MCF 10A (cell line): ENCODE measurements at regions of chr9 and their contacts with region 1.

Region 1: DNA sequence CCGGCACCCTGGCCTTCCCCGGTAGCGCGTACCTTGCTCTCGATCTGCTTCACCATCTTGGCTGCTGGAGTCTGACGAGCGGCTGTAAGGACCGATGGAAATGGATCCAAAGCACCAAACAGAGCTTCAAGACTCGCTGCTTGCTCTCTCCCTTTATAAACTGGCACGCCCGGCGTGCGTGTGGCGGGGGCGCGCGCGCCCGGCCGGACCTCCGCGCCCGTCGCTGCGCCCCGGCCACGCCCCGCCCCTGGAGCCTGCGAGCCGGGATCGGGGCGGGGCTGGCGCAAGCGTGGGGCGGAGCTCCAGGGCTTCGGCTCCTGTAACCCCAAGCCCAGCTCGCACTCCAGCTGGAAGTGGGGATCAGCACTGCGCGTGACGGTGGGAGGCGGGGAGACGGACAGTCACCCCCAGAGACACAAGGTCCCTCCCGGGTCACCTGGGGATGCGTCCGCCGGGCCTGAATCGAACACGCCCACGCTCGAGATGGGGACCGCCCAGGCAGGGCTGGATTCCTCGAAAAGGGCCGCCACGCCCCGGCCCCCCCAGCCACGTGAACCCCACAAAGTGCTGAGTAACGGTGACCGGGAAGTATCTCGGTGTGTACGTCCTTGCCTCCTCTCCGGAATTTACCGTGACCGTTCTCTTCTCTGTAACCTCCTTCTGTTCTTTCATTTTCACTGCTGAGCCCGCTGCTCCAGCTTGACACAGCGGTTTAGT is at the start of gene TXN:
- DNase-seq: peak; percentile 92
- H3K4me3 Mint-ChIP-seq: peak within 1 kb of the TSS; percentile 91
- H3K27ac Mint-ChIP-seq: peak within 1 kb of the TSS; percentile 92
- H3K4me1 Mint-ChIP-seq: peaks cover 40% of the 10 kb centered on the region
- H3K27me3 Mint-ChIP-seq: no peaks in the 10 kb centered on the region
- CTCF ChIP-seq: no peak
- total RNA-seq, gene TXN: 349 TPM in 2 replicates

Region 2: DNA sequence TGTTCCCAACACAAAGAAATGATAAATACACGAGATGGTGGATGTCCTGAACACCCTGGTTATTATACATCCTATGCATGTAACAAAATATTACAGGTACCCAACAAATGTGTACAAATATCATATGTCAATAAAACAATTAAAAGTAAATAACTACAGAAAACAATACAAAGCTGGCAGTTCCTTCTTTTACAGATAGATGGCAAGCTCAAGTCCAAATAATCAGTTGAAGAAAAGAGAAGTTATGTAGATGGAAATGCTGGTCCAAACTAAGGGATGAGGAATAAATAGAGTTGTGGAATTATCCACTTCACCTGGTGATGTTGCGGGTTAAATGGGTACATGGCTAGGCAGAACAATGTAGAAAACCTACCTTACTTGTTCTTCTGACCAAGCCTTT is 397.1 kb before region 1 on chr9:
- CTCF ChIA-PET with region 1: no interaction called
- POLR2A ChIA-PET with region 1: no interaction called
- intact Hi-C with region 1: no loop called
- DNase-seq: no peak
- H3K4me3 Mint-ChIP-seq: no peak overlapping the region
- H3K27ac Mint-ChIP-seq: no peak overlapping the region
- H3K4me1 Mint-ChIP-seq: peaks cover 4% of the 10 kb centered on the region
- H3K27me3 Mint-ChIP-seq: no peaks in the 10 kb centered on the region
- CTCF ChIP-seq: no peak

Region 3: DNA sequence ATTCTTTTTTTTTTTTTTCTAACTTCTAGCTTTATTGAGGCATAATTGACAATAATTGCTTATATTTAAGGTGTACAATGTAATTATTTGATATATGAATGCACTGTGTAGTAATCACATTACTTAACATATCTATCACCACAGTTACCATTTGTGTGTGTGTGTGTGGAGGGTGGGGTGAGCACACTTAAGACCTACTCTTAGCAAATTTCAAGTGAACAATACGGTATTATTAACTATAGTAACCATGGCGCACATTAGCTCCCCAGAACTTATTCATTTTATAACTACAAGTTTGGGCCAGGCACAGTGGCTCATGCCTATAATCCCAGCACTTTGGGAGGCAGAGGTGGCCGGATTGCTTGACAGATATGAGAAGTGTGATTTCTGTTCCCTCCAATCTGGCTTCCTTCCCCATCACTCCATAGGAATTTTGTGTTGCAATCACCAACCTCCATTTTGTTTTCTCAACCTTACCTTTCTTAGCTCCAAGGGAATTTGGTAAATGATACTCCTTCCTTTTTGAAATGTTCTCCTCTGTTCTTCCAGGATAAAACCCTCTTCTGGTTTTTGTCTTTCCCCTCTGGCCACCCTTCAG is 15.2 kb before region 1 on chr9:
- CTCF ChIA-PET with region 1: interaction called, 3 read pairs
- POLR2A ChIA-PET with region 1: interaction called, 20 read pairs
- intact Hi-C with region 1: no loop called
- DNase-seq: no peak
- H3K4me3 Mint-ChIP-seq: no peak overlapping the region
- H3K27ac Mint-ChIP-seq: no peak overlapping the region
- H3K4me1 Mint-ChIP-seq: no peaks in the 10 kb centered on the region
- H3K27me3 Mint-ChIP-seq: no peaks in the 10 kb centered on the region
- CTCF ChIP-seq: no peak

Region 4: DNA sequence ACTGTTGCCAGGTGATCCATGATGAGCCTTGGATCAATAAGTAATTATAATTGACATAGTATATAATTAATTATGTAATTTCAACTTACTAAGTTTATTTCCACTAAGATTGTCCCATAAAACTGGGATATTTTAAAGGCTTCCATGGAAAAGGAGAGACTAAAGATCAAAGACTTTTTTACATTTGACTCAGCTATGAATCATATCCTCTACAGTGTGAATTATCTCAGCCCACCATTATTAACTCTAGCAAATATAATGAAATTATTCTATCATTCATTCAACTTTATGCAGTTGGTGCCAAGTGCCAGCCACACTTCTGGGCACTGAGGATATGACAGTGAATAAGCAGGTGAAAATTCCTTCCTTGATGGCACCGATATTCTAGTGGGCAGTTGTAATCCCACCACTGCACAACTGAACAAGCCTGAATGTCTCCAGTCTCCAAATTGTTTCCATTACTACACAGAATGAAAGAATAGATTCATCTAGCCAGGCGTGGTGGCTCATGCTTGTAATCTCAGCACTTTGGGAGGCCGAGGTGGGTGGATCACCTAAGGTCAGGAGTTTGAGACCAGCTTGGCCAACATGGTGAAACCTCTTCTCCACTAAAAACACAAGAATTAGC is 21.7 kb after region 1 on chr9:
- CTCF ChIA-PET with region 1: interaction called, 15 read pairs
- POLR2A ChIA-PET with region 1: interaction called, 155 read pairs
- intact Hi-C with region 1: no loop called
- DNase-seq: no peak
- H3K4me3 Mint-ChIP-seq: no peak overlapping the region
- H3K27ac Mint-ChIP-seq: no peak overlapping the region
- H3K4me1 Mint-ChIP-seq: no peaks in the 10 kb centered on the region
- H3K27me3 Mint-ChIP-seq: no peaks in the 10 kb centered on the region
- CTCF ChIP-seq: no peak

Region 5: GRCh38 chr9:110291921-110292575 is 35.5 kb after region 1 on chr9:
- CTCF ChIA-PET with region 1: interaction called, 3 read pairs
- POLR2A ChIA-PET with region 1: interaction called, 28 read pairs
- intact Hi-C with region 1: no loop called
- DNase-seq: peak; percentile 57
- H3K4me3 Mint-ChIP-seq: no peak overlapping the region
- H3K27ac Mint-ChIP-seq: no peak overlapping the region
- H3K4me1 Mint-ChIP-seq: peaks cover 12% of the 10 kb centered on the region
- H3K27me3 Mint-ChIP-seq: no peaks in the 10 kb centered on the region
- CTCF ChIP-seq: no peak

Region 6: GRCh38 chr9:110370316-110370715 is 113.8 kb after region 1 on chr9:
- CTCF ChIA-PET with region 1: no interaction called
- POLR2A ChIA-PET with region 1: interaction called, 13 read pairs
- intact Hi-C with region 1: no loop called
- DNase-seq: peak; percentile 31
- H3K4me3 Mint-ChIP-seq: no peak overlapping the region
- H3K27ac Mint-ChIP-seq: no peak overlapping the region
- H3K4me1 Mint-ChIP-seq: no peaks in the 10 kb centered on the region
- H3K27me3 Mint-ChIP-seq: no peaks in the 10 kb centered on the region
- CTCF ChIP-seq: no peak

Region 7: GRCh38 chr9:110476251-110476650 is 219.7 kb after region 1 on chr9:
- CTCF ChIA-PET with region 1: no interaction called
- POLR2A ChIA-PET with region 1: no interaction called
- intact Hi-C with region 1: no loop called
- DNase-seq: no peak
- H3K4me3 Mint-ChIP-seq: no peak overlapping the region
- H3K27ac Mint-ChIP-seq: no peak overlapping the region
- H3K4me1 Mint-ChIP-seq: no peaks in the 10 kb centered on the region
- H3K27me3 Mint-ChIP-seq: no peaks in the 10 kb centered on the region
- CTCF ChIP-seq: no peak

Region 8: DNA sequence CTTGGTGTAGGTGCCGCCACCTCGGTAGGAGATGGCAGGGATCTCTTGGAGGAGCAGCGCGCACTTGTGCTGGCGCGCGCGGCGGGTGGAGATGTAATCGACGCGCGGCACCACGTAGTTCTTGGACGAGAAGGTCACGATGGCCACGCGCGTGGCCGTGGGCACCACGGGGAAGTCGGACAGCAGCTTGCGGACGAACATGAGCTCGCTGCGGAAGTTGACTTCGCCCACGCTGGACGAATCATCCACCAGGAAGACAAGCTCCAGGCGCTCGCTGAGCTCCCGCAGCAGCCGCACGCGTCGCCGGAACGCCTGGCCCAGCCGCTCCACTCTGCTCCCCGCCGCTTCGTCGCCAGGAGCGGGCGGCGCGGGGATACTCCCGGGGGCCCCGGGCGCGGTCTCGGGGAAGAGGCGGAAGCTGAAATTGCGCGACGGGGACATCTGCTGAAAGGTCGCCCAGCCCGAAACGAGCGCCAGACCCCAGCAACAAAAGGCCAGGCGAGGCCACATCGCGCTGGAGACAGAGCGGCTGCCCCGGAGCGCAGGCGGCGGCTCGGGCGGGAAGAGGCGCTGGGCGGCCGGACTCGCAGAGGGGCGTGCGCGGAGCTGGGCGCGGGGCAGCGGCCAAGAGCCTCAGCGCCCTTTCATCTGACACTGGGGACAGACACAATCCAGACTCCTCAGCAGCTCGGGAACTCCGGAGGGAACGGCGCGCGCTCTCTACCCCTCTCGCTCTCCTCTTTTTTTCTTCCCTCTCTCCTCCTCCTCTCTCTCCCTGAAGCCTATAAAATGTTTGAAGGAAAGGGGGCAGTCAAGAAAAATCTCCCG is 322.7 kb after region 1 on chr9 and contains the start of gene SVEP1:
- CTCF ChIA-PET with region 1: interaction called, 3 read pairs
- POLR2A ChIA-PET with region 1: interaction called, 8 read pairs
- intact Hi-C with region 1: loop called (anchors 10 kb)
- DNase-seq: peak; percentile 67
- H3K4me3 Mint-ChIP-seq: peak within 1 kb of the TSS; percentile 98
- H3K27ac Mint-ChIP-seq: peak within 1 kb of the TSS; percentile 37
- H3K4me1 Mint-ChIP-seq: peaks cover 43% of the 10 kb centered on the region
- H3K27me3 Mint-ChIP-seq: no peaks in the 10 kb centered on the region
- CTCF ChIP-seq: no peak
- total RNA-seq, gene SVEP1: 9.9 and 21.9 TPM in 2 replicates